ENCODE measurements at regions of chr3 and their contacts with region 1.

Region 1: DNA sequence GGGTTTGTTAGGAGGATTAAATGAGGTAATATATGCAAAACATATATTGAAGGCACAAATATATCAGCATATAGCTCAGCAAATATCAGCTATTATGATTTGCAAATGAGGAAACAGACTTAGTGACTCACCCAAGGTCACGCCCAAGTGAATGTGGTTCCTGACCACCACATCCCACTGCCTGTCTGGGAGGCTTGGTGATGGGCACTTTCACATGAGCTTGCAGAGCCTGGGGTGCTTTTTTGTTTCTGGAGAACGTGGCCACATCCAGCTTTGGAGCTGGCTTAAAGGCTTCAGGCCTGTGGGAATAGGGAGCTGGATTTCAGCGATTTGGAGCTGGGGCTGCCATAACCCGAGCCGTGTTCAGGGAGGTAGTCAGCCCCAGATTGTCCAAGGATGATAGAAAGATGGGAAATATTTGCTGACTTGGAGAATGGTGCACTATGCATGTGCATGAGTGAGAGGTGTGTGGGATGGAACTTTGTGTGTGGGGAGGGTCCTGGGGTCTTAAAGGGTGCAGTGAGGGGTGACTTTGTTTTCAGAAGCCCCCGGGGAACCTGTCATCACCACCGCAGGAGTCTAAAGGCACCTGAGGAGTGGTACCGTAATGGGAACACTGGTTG is 12.0 kb upstream of the FGD5 start:
- DNase-seq: peak; percentile 46
- ATAC-seq: peak; percentile 41
- H3K4me3 Mint-ChIP-seq: no peak overlapping the region
- H3K27ac Mint-ChIP-seq: no peak overlapping the region
- H3K4me1 Mint-ChIP-seq: peaks cover 8% of the 10 kb centered on the region
- H3K27me3 Mint-ChIP-seq: peaks cover 33% of the 10 kb centered on the region
- CTCF ChIP-seq: no peak

Region 2: GRCh38 chr3:14243782-14244181 is 563.0 kb before region 1 on chr3:
- CTCF ChIA-PET with region 1: no interaction called
- POLR2A ChIA-PET with region 1: no interaction called
- intact Hi-C with region 1: no loop called
- DNase-seq: no peak
- ATAC-seq: no peak
- H3K4me3 Mint-ChIP-seq: no peak overlapping the region
- H3K27ac Mint-ChIP-seq: no peak overlapping the region
- H3K4me1 Mint-ChIP-seq: no peaks in the 10 kb centered on the region
- H3K27me3 Mint-ChIP-seq: peaks cover 1% of the 10 kb centered on the region
- CTCF ChIP-seq: no peak

Region 3: DNA sequence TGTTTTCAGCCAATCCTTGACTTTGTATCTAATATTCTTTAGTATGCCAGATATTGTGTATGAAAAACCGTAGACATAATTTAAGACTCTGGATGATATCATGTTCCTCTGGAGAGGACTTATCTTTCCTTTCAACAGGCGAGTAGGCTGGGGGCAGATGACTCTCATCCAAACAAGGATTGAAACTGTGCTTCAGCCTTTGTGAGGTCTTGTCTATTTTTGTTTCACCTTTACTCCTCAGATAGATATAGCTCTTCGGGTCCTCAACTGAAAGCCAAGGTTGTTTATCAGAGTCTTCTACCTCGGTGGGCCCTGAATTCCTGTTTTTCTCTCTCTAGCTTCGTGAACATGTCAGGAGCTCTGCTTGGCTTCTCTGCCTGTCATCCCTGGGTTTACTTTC is 65.8 kb before region 1 on chr3:
- CTCF ChIA-PET with region 1: no interaction called
- POLR2A ChIA-PET with region 1: no interaction called
- intact Hi-C with region 1: no loop called
- DNase-seq: no peak
- ATAC-seq: no peak
- H3K4me3 Mint-ChIP-seq: no peak overlapping the region
- H3K27ac Mint-ChIP-seq: no peak overlapping the region
- H3K4me1 Mint-ChIP-seq: no peaks in the 10 kb centered on the region
- H3K27me3 Mint-ChIP-seq: peaks cover 13% of the 10 kb centered on the region
- CTCF ChIP-seq: no peak

Region 4: GRCh38 chr3:14847613-14848541 is 41.1 kb after region 1 on chr3:
- CTCF ChIA-PET with region 1: no interaction called
- POLR2A ChIA-PET with region 1: no interaction called
- intact Hi-C with region 1: loop called (anchors 5 kb)
- DNase-seq: peak; percentile 6
- ATAC-seq: peak; percentile 37
- H3K4me3 Mint-ChIP-seq: no peak overlapping the region
- H3K27ac Mint-ChIP-seq: no peak overlapping the region
- H3K4me1 Mint-ChIP-seq: peaks cover 3% of the 10 kb centered on the region
- H3K27me3 Mint-ChIP-seq: peaks cover 3% of the 10 kb centered on the region
- CTCF ChIP-seq: no peak

Region 5: DNA sequence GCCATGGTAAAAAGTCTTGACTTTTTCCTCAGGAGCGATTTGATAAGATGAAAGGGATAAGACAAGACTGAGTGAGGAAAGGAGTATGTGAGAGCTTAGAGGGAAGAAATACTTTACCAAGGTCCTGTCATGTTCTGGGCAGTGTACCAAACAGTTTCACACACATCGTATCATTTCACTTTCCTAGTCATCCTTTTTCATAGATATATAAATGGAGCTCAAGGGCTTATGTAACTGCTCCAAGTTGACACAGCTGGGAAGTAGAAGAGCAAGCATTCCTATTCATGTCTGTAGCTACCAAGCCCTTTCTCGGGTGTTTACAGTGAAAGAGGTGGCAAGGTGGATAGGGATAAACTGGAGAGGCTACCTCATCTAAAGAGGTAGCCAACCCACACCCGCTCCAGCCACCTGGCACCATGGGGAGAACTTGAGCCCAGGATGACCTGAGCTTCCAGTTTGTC is 201.0 kb after region 1 on chr3:
- CTCF ChIA-PET with region 1: no interaction called
- POLR2A ChIA-PET with region 1: no interaction called
- intact Hi-C with region 1: no loop called
- DNase-seq: no peak
- ATAC-seq: no peak
- H3K4me3 Mint-ChIP-seq: no peak overlapping the region
- H3K27ac Mint-ChIP-seq: no peak overlapping the region
- H3K4me1 Mint-ChIP-seq: peaks cover 5% of the 10 kb centered on the region
- H3K27me3 Mint-ChIP-seq: no peaks in the 10 kb centered on the region
- CTCF ChIP-seq: no peak

Region 6: DNA sequence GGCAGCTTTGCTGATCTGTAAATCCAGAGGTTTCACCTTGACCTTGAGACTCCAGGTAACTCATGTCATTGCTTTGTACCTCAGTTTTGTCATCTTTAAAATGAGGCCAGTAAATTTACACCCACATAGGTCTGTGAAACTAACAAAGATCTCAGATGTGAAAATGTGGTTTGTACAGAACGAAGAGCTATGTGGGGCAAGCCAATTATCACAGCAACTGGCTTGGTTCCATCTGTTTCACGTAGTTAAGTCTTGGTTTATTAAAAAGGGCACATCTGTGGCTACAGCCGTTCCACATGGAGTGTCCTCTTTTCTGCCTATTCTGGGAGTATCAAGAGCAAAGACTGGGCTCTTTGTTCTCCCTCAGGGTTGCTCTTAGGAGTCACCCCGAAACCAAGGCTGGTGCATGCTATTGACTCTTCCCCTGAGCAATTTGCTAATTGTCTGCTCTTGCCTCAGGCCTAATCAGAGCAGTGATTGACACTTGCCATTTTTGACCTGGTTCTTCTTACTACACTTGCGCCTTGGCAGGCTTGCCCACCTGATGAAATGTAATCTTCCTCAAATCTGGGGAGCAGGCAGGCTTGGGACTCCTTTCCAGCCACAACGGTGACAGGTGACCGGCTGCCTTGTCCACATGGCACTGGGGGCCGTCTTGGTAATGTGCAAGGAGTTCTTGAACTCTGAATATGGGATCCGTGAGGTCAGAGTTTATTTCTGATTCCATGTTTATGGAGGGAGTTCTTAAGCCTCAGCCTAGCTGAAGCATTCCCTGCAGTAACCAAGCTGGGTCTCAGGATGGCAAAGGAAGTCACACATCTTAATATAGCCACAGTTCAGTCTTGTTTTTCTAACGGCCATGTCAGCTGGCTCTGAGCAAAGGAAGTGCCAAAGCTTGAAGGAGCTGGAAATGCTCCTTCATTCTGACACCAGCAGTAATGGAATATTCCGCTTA is 660.8 kb after region 1 on chr3:
- CTCF ChIA-PET with region 1: no interaction called
- POLR2A ChIA-PET with region 1: no interaction called
- intact Hi-C with region 1: no loop called
- DNase-seq: no peak
- ATAC-seq: no peak
- H3K4me3 Mint-ChIP-seq: no peak overlapping the region
- H3K27ac Mint-ChIP-seq: peak overlapping the region; percentile 0
- H3K4me1 Mint-ChIP-seq: peaks cover 9% of the 10 kb centered on the region
- H3K27me3 Mint-ChIP-seq: no peaks in the 10 kb centered on the region
- CTCF ChIP-seq: no peak